ENCODE measurements at regions of chr5 and their contacts with region 1.

Region 1: DNA sequence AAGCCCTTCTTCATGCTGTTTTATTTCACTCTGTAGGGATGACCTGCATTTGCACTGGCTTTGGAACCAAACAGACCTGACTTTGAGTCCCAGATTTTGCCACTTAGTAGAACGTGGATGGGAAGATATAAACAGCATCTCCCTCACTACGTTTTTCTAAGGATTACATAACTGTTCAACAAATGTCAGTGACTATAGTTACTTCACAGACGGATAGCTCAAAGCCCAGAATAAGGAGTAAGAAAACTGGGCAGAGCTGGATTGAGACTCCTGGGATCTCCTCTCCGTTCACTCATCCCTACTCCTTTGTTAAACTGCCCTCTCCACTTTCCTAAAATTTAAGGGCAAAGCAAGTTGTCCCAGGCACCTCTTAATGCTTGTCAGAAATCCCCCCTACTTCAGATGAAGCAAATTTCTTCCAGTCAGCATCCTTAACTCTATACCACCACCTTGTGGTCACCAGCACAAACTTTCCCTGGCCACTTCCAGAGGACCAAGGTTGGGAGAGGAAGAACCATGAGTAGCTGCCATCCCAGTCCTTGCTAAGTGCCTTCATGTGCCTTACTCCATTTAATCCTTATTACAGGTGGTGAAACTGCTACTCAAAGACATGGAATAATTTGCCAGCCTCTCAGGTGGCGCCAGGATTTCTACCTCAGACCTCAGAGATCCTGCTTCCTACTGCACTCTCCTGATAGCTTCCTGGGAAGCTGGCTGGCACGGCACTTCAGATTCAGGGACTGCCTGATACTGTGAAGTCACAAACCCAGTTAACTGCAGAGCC is 38.4 kb downstream of the EGR1 start:
- DNase-seq: peak in 1 of 4 donors; percentile 79
- ATAC-seq: peak; percentile 89
- H3K4me3 ChIP-seq: no peak overlapping the region
- H3K27ac ChIP-seq: no peak overlapping the region
- H3K4me1 ChIP-seq: peaks cover 3 to 14% of the 10 kb centered on the region in 2 donors
- H3K27me3 ChIP-seq: no peaks in the 10 kb centered on the region
- CTCF ChIP-seq: peak; percentile 59 to 79

Region 2: DNA sequence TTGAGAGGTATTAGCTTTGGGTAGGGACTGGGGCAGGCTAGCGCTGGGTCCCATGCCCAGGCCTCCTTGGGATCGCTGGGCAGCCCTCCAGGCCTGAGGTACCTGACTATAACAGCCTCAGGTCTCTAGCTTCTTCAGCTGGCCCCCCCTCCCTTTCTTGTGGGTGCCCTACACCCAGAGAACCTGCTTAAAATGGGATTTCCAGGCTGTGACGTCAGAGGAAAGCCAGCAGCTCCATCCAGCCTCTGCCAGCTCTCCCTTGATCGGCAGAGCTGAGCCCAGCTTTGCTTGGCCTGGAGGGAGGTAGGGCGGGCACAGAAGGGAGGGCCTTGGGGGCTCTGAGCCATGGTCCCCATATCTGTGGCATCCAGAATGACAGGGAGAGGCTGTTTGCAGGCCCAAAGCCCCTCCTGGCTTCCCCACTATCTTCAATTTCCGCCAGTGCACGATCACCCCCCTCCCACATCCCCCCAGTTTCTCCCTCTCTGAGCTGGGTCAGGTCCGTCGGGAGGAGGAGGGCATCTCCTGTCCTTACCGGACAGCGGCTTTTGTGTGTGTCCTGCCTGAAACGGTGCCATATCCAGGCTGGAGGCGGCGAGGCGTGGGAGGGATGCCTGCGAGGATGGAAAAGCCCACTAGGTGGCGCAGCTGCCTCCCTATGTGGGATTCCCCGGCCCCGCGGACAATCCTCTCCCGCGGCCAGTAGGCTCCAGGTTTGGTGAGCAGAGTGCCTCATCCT is 54.0 kb before region 1 on chr5:
- intact Hi-C with region 1: loop called in 1 of 2 experiments (anchors 5 kb)
- DNase-seq: peak; percentile 81 to 97 (median 88)
- ATAC-seq: peak; percentile 99
- H3K4me3 ChIP-seq: no peak overlapping the region
- H3K27ac ChIP-seq: no peak overlapping the region
- H3K4me1 ChIP-seq: no peaks in the 10 kb centered on the region
- H3K27me3 ChIP-seq: no peaks in the 10 kb centered on the region
- CTCF ChIP-seq: peak; percentile 95 to 99

Measured in left lung (tissue), 14 donors.